Mammary epithelial cell (primary cell): ENCODE measurements at regions of chr1 and their contacts with region 1.

Region 1: DNA sequence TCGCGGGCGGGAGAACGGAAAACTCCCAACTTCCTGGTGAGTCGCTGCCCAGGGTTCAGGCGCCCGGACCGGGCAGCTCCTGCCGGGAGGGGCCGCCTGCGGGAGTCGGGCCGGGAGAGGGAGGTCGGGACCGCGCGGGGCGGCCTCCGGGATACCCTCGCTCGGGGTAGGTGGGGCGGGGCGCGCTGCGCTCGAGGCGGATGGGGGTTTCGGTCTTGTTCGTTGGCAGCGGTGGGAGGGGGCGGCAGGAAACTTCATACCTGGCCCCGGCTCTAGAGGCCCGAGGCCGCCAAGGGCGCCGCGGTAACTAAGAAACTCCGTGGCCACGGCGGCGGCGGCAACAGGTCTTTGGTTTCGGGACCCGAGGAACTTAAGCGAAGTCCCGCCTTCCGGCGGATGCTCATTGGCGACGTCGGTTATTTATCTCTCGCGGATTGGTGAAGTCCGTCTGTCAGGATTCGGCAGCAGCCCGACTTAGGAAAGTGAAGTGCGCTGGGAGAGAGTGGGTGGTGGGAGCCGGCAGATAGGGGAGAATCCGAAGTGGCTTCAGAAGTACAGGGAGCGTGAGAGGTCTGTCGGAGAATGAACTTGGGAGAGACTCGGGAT is 546 bp downstream of the NEK7 start:
- DNase-seq: peak; percentile 93
- H3K4me3 ChIP-seq: peak overlapping the region; percentile 70 to 91 (median 81)
- H3K27ac ChIP-seq: peak overlapping the region; percentile 93
- H3K4me1 ChIP-seq: peaks cover 22% of the 10 kb centered on the region
- H3K27me3 ChIP-seq: no peaks in the 10 kb centered on the region
- CTCF ChIP-seq: no peak

Region 2: DNA sequence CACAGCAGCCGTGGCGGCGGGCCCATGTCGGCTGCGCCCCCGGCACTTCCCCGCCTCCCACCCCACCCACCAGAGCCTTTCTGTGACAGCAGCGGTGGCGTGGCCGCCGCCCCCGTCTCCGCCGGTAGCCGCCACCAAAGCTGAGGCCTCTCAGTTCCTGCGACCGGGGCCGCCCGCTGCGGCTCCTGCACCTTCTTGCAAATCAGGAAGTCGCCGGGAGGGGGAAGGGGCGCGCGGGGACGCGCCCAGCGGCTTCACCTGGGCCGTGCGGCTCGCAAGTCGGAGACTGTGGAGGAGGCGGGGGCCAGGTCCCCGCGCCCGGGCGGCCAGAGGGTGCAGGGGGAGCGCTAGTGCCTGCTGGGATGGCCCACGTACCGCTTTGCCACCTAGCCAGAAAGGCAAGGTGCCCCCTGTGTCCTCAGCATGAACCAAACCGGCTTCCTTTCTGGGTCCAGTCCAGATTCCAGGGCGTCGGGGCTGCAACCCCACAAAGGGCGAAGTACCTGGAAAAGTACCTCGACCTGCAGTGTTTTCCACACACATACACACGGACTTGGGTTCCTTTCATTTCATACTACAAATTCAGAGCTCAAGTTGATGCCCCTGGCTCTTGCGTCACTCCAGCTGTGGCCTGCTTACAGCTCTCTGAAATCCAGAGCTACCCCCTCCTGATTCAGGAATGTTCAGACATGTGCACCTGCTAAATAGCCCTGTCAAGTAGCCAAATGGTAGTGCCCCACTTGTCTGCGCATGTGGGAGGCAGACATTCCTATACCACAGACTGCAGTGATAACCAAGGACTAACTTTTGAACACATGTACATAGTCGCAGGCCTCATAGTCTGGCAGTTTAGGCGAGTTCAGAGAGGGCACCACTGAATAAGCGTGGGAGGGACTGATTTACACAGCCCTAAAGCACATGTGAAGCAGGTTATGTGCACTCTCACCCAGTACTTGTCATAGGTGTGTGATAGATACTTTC is 381.8 kb before region 1 on chr1 and contains the start of gene DENND1B:
- CTCF ChIA-PET with region 1: no interaction called
- dilution Hi-C with region 1: no loop called
- in situ Hi-C with region 1: no loop called
- intact Hi-C with region 1: loop called (anchors 10 kb)
- DNase-seq: peak; percentile 69
- H3K4me3 ChIP-seq: peak within 1 kb of the TSS; percentile 76 to 78 (median 77)
- H3K27ac ChIP-seq: peak within 1 kb of the TSS; percentile 83
- H3K4me1 ChIP-seq: peaks cover 23% of the 10 kb centered on the region
- H3K27me3 ChIP-seq: no peaks in the 10 kb centered on the region
- CTCF ChIP-seq: peak in 1 of 2 donors; percentile 22
- total RNA-seq, gene DENND1B: 12.5 to 31.7 TPM

Region 3: DNA sequence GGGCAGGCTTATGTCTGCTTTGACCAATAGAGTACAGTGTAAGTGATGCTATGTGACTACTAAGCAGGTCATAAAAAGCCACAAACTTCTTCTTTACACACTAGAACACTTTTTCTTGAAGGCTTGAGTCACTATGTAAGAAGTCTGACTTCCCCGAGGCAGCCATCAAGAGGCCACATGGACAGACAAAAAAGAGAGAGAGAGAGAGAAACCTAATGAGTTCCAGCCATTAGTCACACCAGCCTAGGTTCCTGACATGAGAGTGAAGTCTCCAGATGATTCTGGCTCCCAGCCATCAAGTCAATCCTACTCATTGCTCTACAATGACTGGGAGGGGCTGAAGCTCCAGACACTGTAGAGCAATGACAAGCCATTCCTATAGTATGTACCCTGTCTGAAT is 138.8 kb before region 1 on chr1:
- CTCF ChIA-PET with region 1: no interaction called
- dilution Hi-C with region 1: no loop called
- in situ Hi-C with region 1: no loop called
- intact Hi-C with region 1: loop called (anchors 2 kb)
- DNase-seq: peak; percentile 99
- H3K4me3 ChIP-seq: no peak overlapping the region
- H3K27ac ChIP-seq: peak overlapping the region; percentile 45
- H3K4me1 ChIP-seq: peaks cover 13% of the 10 kb centered on the region
- H3K27me3 ChIP-seq: no peaks in the 10 kb centered on the region
- CTCF ChIP-seq: no peak

Region 4: DNA sequence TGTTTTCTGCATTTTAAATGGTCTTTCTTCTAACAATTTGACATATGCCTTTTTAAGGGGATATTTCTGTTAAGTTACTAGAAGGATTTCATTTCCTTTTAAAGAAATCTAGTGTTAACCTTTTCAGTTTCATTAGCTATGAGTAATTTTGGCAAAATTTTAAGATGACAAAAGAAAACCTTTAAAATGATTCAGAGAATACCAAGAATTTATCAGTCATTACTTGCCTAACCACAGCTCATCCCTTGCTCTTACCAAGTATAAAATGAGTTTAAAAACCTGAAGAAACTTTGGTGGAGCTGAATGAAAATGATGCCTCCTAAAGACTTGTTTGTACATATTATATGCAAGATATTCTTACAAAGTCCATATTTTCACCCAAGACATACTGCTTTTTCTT is 101.1 kb after region 1 on chr1:
- CTCF ChIA-PET with region 1: no interaction called
- dilution Hi-C with region 1: no loop called
- in situ Hi-C with region 1: no loop called
- intact Hi-C with region 1: loop called (anchors 5 kb)
- DNase-seq: peak; percentile 76
- H3K4me3 ChIP-seq: peak overlapping the region in 2 of 3 experiments; percentile 23 to 41
- H3K27ac ChIP-seq: peak overlapping the region; percentile 84
- H3K4me1 ChIP-seq: peaks cover 21% of the 10 kb centered on the region
- H3K27me3 ChIP-seq: no peaks in the 10 kb centered on the region
- CTCF ChIP-seq: no peak

Region 5: DNA sequence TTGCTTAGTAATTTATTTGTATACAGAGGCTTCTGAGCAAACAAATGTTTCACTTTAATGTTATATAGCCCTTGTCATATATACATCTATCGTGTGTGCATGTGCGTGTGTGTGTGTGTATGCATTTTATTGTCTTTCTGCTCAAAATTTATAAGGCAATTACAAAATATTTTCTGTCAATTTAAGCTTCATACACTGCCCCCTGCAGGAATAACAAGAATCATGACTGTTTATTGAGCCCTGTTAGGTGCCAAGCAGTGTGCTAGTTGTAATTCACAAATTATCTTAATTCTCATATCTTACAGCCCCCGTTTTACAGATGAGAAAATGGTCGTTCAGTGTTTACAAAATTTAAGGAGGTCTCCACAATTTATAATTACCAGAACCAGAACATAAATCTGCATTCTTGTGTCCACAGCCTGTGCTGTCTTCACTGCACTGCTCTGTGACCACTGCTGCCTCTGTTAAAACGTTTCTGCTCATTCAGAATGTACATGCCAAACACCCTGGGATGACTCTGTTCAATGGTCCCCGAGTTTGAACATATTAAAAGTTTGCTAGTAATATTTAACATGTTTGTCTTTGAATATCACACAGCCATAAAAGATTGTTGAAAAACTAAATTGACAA is 201.8 kb after region 1 on chr1:
- CTCF ChIA-PET with region 1: interaction called, 6 read pairs
- dilution Hi-C with region 1: no loop called
- in situ Hi-C with region 1: no loop called
- intact Hi-C with region 1: loop called (anchors 2 kb)
- DNase-seq: no peak
- H3K4me3 ChIP-seq: no peak overlapping the region
- H3K27ac ChIP-seq: no peak overlapping the region
- H3K4me1 ChIP-seq: no peaks in the 10 kb centered on the region
- H3K27me3 ChIP-seq: no peaks in the 10 kb centered on the region
- CTCF ChIP-seq: peak; percentile 44 to 47

Region 6: DNA sequence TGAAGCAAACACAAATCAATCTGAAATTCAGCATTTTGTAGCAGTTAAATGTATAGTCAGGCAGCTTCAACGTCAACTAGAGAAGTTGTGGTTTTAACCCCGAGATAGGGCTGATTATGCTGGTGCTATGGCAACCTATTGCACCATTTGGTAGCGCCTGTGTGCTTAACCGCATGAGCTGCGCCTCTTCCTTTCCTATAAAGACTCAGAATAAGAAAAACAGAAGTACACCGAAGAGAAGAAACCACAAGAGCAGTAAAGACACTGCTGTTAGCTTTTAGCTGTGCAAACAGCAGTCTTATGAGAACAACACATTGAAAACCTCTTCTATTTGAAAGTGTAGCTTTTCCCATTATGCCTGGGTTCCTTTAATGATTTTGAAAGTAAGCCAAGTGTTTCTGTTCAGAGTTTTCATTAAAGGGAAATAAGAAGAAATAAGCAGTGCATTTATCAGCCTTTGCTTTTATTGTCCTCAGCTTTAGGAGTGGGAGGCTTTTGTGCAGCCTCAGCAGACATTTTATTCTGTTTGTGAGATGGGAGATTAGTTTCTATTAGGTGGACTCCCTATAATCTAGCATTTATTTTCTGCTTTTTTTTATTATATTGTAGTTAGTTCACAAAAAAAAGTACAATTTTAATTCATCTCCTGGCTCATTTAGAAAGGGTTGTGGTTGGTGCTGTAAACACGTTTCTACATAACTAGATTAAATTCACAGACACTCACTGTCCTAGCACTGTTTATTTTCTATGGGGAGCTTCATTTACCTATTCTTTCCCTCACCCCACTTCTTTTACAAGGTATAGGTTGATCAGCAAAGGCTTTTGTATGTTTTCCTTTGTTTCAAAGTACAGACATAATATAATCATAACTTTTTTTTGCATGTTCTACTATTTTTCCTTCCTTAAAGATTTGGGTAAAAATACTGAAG is 524.8 kb after region 1 on chr1:
- CTCF ChIA-PET with region 1: no interaction called
- dilution Hi-C with region 1: no loop called
- in situ Hi-C with region 1: no loop called
- intact Hi-C with region 1: loop called (anchors 5 kb)
- DNase-seq: peak; percentile 94
- H3K4me3 ChIP-seq: peak overlapping the region in 2 of 3 experiments; percentile 2 to 24
- H3K27ac ChIP-seq: peak overlapping the region; percentile 80
- H3K4me1 ChIP-seq: peaks cover 8% of the 10 kb centered on the region
- H3K27me3 ChIP-seq: no peaks in the 10 kb centered on the region
- CTCF ChIP-seq: no peak